Right cardiac atrium (tissue), 5 donors: ENCODE measurements at regions of chr7 and their contacts with region 1.

Region 1: GRCh38 chr7:103369430-103369829 is 22.0 kb downstream of the PSMC2 start:
- DNase-seq: no peak
- ATAC-seq: no peak
- H3K4me3 ChIP-seq: no peak overlapping the region
- H3K27ac ChIP-seq: no peak overlapping the region
- H3K4me1 ChIP-seq: no peaks in the 10 kb centered on the region
- H3K27me3 ChIP-seq: no peaks in the 10 kb centered on the region

Region 2: GRCh38 chr7:103317016-103317415 is 52.4 kb before region 1 on chr7:
- intact Hi-C with region 1: loop called in 1 of 4 experiments (anchors 10 kb)
- DNase-seq: no peak
- ATAC-seq: no peak
- H3K4me3 ChIP-seq: no peak overlapping the region
- H3K27ac ChIP-seq: peak overlapping the region; percentile 13
- H3K4me1 ChIP-seq: no peaks in the 10 kb centered on the region
- H3K27me3 ChIP-seq: no peaks in the 10 kb centered on the region